ENCODE measurements at regions of chr17 and their contacts with region 1.

Region 1: DNA sequence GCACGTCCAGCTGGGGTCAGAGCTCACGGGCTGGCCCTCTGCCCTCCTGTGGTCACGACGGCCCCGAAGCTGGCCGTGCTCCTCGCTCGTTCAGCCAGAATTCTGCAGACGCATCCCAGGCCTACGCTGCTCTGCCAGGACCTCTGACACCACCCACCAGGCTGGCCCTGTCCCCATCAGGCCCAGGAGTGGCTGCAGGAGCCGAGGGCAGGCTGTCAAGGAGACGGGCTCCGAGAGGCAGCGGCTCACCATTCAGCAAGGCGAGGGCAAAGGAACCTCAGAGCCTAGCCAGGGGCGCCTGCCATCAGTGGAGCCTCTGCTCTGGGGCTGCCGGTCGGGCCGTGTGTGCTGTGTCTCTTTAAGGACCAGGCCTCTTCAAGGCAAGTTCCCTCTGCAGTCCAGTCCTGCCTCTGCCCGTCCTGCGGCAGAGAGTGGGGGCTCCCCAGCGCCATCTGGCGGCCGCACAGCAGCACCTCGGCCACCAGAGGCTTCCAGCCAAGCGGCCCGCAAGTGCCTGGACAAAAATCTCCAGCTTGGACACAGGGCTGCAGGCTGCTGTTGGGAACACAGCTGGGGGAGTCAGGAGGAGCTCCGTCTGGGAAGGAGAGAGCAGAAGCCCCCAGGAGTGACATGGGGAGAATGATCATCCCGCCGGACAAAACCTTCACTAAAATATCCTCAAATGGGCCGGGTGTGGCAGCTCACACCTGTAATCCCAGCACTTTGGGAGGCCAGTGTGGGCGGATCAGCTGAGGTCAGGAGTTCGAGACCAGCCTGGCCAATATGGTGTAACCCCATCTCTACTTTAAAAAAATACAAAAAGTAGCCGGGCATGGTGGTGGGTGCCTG is 7.4 kb upstream of the ABR start:
- H3K4me3 ChIP-seq: no peak overlapping the region
- H3K27ac ChIP-seq: no peak overlapping the region
- H3K4me1 ChIP-seq: no peaks in the 10 kb centered on the region; the same call in 1 of the 2 replicates
- CTCF ChIP-seq: peak; percentile 98

Region 2: GRCh38 chr17:1094591-1094990 is 92.6 kb before region 1 on chr17:
- CTCF ChIA-PET with region 1: no interaction called
- POLR2A ChIA-PET with region 1: no interaction called
- H3K4me3 ChIP-seq: no peak overlapping the region
- H3K27ac ChIP-seq: no peak overlapping the region
- H3K4me1 ChIP-seq: no peaks in the 10 kb centered on the region
- CTCF ChIP-seq: no peak

Region 3: DNA sequence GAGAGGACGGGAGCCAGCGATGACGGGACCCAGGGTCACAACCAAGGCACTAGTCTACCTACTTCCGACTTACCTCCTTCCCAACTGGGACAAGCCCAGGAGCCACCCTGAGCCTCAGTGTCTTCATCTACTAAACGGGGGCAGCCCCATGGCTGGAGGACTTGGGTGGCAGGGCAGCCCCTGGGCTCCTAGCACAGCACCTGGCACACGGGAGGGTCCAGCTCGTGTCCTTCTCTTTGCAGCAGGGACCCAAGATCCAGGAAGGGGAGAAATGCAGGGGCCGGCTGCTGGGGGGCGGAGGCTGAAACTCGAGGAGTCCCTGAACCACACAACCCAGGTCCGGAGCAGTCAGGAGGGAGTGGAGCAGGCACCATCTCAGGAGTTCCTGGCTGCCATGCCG is 70.5 kb before region 1 on chr17:
- CTCF ChIA-PET with region 1: interaction called, 75 read pairs
- POLR2A ChIA-PET with region 1: no interaction called
- H3K4me3 ChIP-seq: no peak overlapping the region
- H3K27ac ChIP-seq: peak overlapping the region; percentile 8; the same call in 1 of the 2 replicates
- H3K4me1 ChIP-seq: peaks cover 16% of the 10 kb centered on the region
- CTCF ChIP-seq: no peak

Region 4: GRCh38 chr17:1147661-1148060 is 39.5 kb before region 1 on chr17:
- CTCF ChIA-PET with region 1: interaction called, 10 read pairs
- POLR2A ChIA-PET with region 1: no interaction called
- H3K4me3 ChIP-seq: no peak overlapping the region
- H3K27ac ChIP-seq: no peak overlapping the region
- H3K4me1 ChIP-seq: peaks cover 8% of the 10 kb centered on the region
- CTCF ChIP-seq: peak; percentile 79; the same call in 1 of the 2 replicates

Region 5: DNA sequence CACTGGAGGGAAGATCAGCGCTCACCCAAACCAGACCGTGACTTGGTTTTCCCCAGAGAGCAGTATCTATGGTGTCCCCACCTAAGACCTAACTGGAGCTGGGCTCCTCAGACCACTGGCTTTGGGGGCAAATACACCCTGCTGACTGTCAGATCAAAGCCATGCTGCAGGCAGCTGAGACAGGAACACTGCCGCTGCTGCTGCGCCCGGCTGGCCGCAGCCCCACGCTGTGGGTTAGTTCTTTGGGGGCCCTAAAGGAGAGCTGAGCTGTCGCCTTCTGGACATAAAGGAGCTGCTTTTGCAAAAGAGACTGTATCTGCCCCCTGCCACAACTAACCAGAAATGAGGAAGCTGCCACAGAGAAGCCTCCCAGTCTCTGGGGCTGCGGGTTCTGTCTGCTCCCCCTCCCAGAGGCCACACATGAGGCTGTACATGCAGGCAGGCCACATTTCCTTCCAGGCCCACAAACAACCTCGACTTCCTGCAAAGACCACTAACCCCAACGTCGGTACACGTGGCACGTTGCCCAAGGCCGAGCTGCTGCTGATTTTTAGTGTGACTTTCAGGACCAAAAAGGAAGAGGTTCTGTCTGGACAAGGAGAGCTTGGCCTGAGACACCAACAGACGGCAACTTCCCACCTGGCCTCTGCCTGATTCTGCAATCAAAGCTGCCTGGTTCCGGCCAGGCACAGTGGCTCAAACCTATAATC is 10.8 kb after region 1 on chr17:
- CTCF ChIA-PET with region 1: interaction called, 84 read pairs
- POLR2A ChIA-PET with region 1: no interaction called
- H3K4me3 ChIP-seq: no peak overlapping the region
- H3K27ac ChIP-seq: no peak overlapping the region
- H3K4me1 ChIP-seq: peaks cover 2% of the 10 kb centered on the region; the same call in 1 of the 2 replicates
- CTCF ChIP-seq: no peak

Region 6: DNA sequence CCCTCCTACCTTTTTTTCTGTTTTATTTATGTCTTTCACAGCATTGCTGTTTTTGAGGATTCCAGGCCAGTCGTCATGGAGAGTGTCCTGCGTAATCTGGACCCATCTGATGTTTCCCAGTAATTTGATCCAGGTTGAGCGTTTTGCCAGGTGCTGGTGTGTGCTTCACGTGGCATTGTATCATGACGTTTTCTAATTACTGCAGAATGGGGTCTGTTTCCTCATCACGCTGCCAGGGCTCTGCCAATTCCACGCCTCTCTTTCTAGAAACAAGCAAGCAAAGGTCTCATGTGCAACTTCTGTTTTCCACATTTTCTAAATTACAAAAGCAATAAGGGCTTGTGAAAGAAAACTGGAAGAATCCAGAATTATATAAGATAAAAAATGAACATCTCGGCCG is 54.8 kb after region 1 on chr17:
- CTCF ChIA-PET with region 1: no interaction called
- POLR2A ChIA-PET with region 1: no interaction called
- H3K4me3 ChIP-seq: no peak overlapping the region
- H3K27ac ChIP-seq: no peak overlapping the region
- H3K4me1 ChIP-seq: no peaks in the 10 kb centered on the region
- CTCF ChIP-seq: no peak